MCF 10A (cell line): ENCODE measurements at regions of chr5 and their contacts with region 1.

Region 1: DNA sequence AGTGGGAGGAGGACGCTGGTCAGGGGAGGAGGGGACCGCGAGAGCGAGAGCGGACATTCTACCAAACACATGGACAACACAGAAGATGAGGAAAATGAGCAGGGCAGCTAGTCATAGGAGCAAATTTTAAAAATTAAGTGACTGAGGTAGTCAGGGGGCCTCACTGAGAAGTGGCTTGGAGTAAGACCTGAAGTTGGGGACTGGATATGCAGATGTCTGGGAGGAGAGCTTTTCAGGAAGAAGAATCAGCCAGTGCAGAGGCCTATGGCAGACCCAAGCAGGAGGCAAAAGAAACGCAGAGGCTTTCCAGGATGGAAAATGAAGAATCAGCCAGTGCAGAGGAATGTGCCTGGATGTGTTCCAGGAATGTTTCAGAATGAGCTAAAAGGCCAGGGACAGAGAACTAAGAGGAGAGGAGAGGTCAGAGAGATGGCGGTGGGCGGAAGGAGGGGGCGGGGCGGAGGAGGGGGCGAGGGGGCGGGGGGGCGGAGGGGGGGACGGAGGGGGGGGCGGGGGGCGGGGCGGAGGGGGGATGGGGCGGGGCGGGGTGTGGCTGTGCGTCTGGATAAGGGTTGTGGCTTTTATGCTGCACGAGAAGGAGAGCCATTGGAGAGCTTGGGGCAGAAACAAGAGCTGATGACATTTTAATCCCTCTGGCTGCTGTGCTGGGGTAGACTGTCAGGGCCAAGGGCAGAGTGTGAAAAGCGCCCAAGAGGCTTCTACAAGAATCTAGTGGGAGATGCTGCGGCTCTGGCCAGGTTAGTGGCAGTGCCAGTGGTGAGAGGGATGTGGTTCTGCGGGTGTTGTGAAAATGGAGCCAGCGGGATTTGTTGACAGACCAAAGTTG is 129.6 kb downstream of the KCNIP1 start:
- DNase-seq: peak; percentile 82
- H3K4me3 Mint-ChIP-seq: peak overlapping the region; percentile 65
- H3K27ac Mint-ChIP-seq: peak overlapping the region; percentile 17
- H3K4me1 Mint-ChIP-seq: peaks cover 20% of the 10 kb centered on the region
- H3K27me3 Mint-ChIP-seq: peaks cover 15% of the 10 kb centered on the region
- CTCF ChIP-seq: no peak

Region 2: GRCh38 chr5:170444969-170445505 is 188.4 kb before region 1 on chr5:
- CTCF ChIA-PET with region 1: interaction called, 19 read pairs
- POLR2A ChIA-PET with region 1: no interaction called
- intact Hi-C with region 1: no loop called
- DNase-seq: no peak
- H3K4me3 Mint-ChIP-seq: no peak overlapping the region
- H3K27ac Mint-ChIP-seq: no peak overlapping the region
- H3K4me1 Mint-ChIP-seq: no peaks in the 10 kb centered on the region
- H3K27me3 Mint-ChIP-seq: no peaks in the 10 kb centered on the region
- CTCF ChIP-seq: no peak

Region 3: GRCh38 chr5:170571875-170572852 is 61.3 kb before region 1 on chr5:
- CTCF ChIA-PET with region 1: interaction called, 13 read pairs
- POLR2A ChIA-PET with region 1: no interaction called
- intact Hi-C with region 1: no loop called
- DNase-seq: no peak
- H3K4me3 Mint-ChIP-seq: no peak overlapping the region
- H3K27ac Mint-ChIP-seq: no peak overlapping the region
- H3K4me1 Mint-ChIP-seq: peaks cover 5% of the 10 kb centered on the region
- H3K27me3 Mint-ChIP-seq: peaks cover 63% of the 10 kb centered on the region
- CTCF ChIP-seq: no peak

Region 4: GRCh38 chr5:170603578-170604565 is 29.6 kb before region 1 on chr5:
- CTCF ChIA-PET with region 1: interaction called, 233 read pairs
- POLR2A ChIA-PET with region 1: interaction called, 3 read pairs
- intact Hi-C with region 1: loop called (anchors 1 kb)
- DNase-seq: peak; percentile 86
- H3K4me3 Mint-ChIP-seq: no peak overlapping the region
- H3K27ac Mint-ChIP-seq: no peak overlapping the region
- H3K4me1 Mint-ChIP-seq: peaks cover 5% of the 10 kb centered on the region
- H3K27me3 Mint-ChIP-seq: peaks cover 51% of the 10 kb centered on the region
- CTCF ChIP-seq: peak; percentile 97

Region 5: DNA sequence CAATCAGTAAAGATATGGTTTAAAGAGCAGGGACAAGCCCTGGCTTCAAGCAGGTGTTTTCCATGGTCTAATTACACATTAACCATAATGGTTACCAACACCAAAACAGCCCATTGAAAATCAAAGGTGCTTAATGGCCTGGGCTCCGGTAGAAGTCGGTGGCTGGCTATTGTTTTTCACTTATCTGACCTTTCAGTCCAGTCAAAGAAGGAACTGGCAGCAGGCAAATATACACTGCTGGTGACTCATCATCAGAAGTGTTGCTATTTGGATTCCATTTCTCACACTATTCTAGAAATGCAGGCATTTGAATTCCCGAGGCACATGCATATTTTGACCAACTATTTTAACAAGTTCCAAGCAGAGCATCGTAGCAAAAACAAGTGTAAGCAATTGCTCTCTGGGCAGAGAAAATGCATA is 123.7 kb after region 1 on chr5:
- CTCF ChIA-PET with region 1: interaction called, 12 read pairs
- POLR2A ChIA-PET with region 1: interaction called, 4 read pairs
- intact Hi-C with region 1: no loop called
- DNase-seq: peak; percentile 77
- H3K4me3 Mint-ChIP-seq: no peak overlapping the region
- H3K27ac Mint-ChIP-seq: peak overlapping the region; percentile 84
- H3K4me1 Mint-ChIP-seq: peaks cover 45% of the 10 kb centered on the region
- H3K27me3 Mint-ChIP-seq: no peaks in the 10 kb centered on the region
- CTCF ChIP-seq: no peak